Activated CD4-positive, alpha-beta T cell treated with anti-CD3 and anti-CD28 coated beads for 36 hours (primary cell): ENCODE measurements at regions of chr3 and their contacts with region 1.

Region 1: GRCh38 chr3:125684199-125684598 is 88.9 kb upstream of the OSBPL11 start:
- DNase-seq: peak; percentile 26
- ATAC-seq: no peak
- H3K4me3 Mint-ChIP-seq: no peak overlapping the region
- H3K27ac Mint-ChIP-seq: no peak overlapping the region
- H3K4me1 Mint-ChIP-seq: no peaks in the 10 kb centered on the region
- H3K27me3 Mint-ChIP-seq: peaks cover 6% of the 10 kb centered on the region

Region 2: DNA sequence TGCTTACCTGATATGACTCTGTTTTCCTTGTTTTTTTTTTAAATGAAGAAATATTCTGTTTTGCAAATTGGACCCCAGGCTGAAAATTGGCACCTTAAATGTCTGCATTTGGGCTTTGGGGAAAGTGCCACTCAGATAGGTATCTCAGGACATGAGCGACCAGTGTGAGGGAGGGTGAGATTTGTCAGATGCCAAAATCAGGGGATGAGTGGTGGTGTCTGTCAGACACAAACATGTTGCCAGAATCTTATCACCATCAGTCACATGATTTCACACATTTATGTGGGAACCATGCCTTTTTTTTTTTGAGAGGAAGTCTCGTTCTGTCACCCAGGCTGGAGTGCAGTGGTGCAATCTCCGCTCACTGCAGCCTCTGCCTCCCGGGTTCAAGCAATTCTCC is 13.3 kb before region 1 on chr3:
- CTCF ChIA-PET with region 1: no interaction called
- POLR2A ChIA-PET with region 1: no interaction called
- intact Hi-C with region 1: loop called in 1 of 2 experiments (anchors 1 kb)
- DNase-seq: no peak
- ATAC-seq: no peak
- H3K4me3 Mint-ChIP-seq: no peak overlapping the region
- H3K27ac Mint-ChIP-seq: no peak overlapping the region
- H3K4me1 Mint-ChIP-seq: no peaks in the 10 kb centered on the region
- H3K27me3 Mint-ChIP-seq: no peaks in the 10 kb centered on the region